ENCODE measurements at regions of chr1 and their contacts with region 1.

Region 1: DNA sequence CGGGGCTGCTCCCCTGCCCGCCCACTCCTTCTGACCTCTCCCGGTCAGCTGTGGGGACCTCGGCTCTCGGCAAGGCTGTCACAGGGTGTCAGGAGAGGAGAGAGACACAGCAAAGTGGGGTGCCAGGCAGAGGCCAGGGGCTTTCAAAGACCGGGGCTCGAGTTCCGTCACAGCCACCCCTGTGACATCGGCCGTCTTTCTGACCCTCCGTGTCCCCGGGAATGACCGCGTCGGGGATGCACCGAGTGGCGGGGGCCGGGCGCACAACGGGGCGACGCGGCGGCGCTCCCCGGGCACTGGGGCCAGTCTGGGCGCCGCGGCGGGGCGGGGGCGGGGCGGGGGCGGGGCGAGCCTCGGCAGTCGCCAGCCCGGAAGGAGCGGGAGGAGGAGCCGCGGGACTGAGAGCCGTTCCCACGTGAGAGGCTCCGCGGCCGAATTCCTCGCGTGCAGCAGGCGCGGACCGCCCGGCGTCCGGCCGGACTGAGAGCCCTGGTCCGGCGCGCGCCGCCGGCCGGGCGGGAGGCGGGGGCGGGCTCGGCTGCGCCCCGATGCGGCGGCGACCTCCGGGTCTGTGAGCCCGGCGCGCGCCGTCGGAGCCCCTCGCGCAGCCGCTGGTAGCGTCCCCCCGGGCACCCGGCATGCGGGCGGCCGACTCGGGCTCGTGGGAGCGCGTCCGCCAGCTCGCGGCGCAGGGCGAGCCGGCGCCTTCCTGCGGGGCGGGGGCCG is 229.7 kb upstream of the TMEM51 start:
- DNase-seq: peak in 1 of 2 donors; percentile 83
- H3K4me3 ChIP-seq: peak overlapping the region; percentile 77 to 91
- H3K27ac ChIP-seq: peak overlapping the region; percentile 74 to 85
- H3K4me1 ChIP-seq: peaks cover 0 to 15% of the 10 kb centered on the region in 2 donors
- H3K27me3 ChIP-seq: no peaks in the 10 kb centered on the region
- CTCF ChIP-seq: no peak

Region 2: GRCh38 chr1:14850566-14850965 is 73.3 kb before region 1 on chr1:
- intact Hi-C with region 1: no loop called
- DNase-seq: no peak
- H3K4me3 ChIP-seq: no peak overlapping the region
- H3K27ac ChIP-seq: no peak overlapping the region
- H3K4me1 ChIP-seq: no peaks in the 10 kb centered on the region
- H3K27me3 ChIP-seq: no peaks in the 10 kb centered on the region
- CTCF ChIP-seq: no peak

Region 3: DNA sequence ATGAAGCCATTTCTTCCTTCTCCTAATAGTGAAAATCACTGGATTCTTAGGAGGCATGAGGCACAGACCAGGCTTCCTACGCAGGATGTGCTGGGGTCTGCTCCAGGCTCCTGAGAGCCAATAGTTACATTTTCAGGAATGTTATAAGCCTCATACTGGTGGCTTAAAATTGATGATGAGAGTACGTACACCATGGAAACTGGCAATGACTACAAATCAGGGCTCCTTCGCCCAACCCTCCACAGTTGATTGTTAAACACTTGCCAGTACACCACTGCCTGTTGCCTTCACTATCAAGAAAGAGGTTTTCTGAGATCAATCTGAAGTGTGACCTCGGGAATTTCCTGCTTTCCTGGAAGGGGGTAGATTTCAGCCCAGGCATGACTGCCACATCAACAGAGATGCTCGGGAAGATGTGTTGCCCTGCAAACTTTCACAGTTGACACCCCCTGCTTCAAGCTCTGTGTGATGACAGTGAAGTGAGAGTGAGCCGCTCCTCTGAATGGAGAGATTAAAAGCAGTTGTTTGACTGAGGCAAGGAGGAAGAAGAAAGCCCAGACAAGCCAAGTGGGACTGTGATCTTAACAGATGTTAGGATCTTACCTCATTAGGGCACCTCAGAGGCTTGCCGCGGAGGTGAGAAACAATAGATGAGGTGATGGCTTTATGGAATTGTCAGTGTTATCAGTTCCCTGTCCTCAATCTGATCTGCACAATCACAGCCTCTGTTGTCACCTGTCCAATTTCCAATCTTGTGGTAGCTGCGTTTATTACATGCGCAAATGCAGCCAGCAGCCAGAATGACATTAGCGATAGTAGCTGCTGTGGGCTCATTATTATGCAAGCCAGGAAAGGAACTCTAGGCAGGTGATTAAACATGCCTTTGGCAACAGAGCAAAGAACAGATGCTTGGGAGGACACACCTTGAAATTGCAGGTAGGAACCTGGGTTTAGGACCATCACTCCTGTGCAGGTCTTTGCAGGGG is 48.1 kb before region 1 on chr1:
- intact Hi-C with region 1: no loop called
- DNase-seq: no peak
- H3K4me3 ChIP-seq: no peak overlapping the region
- H3K27ac ChIP-seq: no peak overlapping the region
- H3K4me1 ChIP-seq: no peaks in the 10 kb centered on the region
- H3K27me3 ChIP-seq: no peaks in the 10 kb centered on the region
- CTCF ChIP-seq: no peak

Region 4: DNA sequence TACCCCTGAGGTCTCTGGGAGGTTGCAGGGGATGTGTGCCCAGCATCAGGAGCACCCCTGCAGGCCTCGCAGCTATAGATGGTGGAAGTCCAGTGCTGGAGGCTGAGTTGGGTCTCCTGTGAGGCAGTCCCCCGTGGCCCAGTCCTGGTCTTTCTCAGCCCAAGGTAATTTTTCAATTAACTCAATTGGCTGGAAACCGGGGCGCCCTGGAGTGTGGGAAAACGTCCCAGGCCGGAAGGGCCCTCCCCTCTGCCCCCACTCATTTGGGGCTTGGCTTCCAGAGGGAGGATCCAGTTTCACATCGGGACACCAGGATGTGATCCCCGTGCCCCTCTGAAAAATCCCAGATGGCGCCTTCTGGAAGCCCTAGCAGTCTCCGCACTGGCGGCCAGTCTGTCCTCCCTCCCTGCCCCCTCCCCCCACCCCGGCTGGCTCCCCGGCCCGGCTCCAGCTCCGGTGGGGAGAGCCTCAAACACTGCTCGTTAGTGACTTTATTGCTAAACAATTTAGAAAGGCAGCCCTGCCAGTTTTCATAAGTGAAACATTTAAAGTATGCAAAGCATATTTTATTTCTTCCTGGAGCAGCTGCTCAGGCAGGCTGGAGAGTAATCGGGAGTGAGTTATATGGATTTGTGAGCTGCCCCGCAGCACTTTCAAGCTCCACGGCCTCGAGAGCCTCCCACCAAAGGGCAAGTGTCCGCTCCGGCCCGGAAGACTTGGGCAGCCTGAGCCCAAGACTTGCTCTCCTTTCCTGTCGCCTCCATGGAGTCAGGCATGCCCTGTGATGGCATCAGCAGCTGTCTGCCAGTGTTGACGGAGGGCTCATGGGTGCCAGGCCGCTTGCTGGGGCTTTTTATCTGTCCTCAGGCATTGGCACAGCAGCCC is 21.5 kb after region 1 on chr1:
- intact Hi-C with region 1: loop called (anchors 1 kb)
- DNase-seq: peak in 1 of 2 donors; percentile 85
- H3K4me3 ChIP-seq: peak overlapping the region; percentile 22 to 39
- H3K27ac ChIP-seq: peak overlapping the region; percentile 77 to 93
- H3K4me1 ChIP-seq: peaks cover 13 to 44% of the 10 kb centered on the region in 2 donors
- H3K27me3 ChIP-seq: no peaks in the 10 kb centered on the region
- CTCF ChIP-seq: no peak

Region 5: DNA sequence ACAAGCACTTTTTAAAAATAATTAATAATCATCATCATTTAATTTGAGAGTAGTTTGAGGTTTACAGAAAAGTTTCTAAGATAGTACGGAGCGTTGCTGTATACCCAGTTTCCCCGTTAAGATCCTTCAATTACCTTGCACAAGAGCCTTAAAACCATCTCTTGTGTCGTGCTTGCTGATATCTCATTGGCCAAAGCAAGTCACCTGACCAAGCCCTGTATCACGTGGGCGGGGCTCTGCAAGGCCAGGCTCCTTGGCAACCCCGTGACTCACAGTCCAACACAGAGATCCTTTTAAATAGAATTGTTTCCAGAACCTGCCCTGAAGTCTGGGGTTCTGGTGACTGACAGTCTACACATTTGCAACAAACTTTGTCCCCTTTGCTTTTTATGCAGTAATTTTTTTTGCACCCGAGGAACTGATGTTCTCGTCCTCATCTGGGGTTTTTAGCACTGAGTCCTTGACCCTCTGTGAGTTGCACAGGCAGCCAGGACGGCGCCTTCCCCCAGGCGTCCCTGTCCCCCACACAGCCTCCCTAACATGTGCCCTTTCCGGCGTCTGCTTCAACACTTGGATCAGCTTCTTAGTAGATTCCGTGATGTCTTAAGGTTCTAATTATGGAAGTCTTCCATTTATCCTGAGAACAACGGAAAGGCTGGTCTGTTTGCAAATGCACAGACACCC is 46.4 kb after region 1 on chr1:
- intact Hi-C with region 1: loop called (anchors 1 kb)
- DNase-seq: peak; percentile 60 to 94
- H3K4me3 ChIP-seq: no peak overlapping the region
- H3K27ac ChIP-seq: peak overlapping the region; percentile 83 to 90
- H3K4me1 ChIP-seq: peaks cover 16 to 39% of the 10 kb centered on the region in 2 donors
- H3K27me3 ChIP-seq: no peaks in the 10 kb centered on the region
- CTCF ChIP-seq: no peak

Region 6: GRCh38 chr1:15028102-15028501 is 104.2 kb after region 1 on chr1:
- intact Hi-C with region 1: loop called (anchors 1 kb)
- DNase-seq: peak; percentile 19 to 88
- H3K4me3 ChIP-seq: no peak overlapping the region
- H3K27ac ChIP-seq: peak overlapping the region; percentile 58 to 77
- H3K4me1 ChIP-seq: peaks cover 4 to 12% of the 10 kb centered on the region in 2 donors
- H3K27me3 ChIP-seq: no peaks in the 10 kb centered on the region
- CTCF ChIP-seq: no peak

Region 7: GRCh38 chr1:15152318-15153183 is 228.7 kb after region 1 on chr1:
- intact Hi-C with region 1: loop called (anchors 10 kb)
- DNase-seq: peak; percentile 44 to 90
- H3K4me3 ChIP-seq: peak overlapping the region; percentile 78 to 91
- H3K27ac ChIP-seq: peak overlapping the region; percentile 74 to 82
- H3K4me1 ChIP-seq: peaks cover 0 to 3% of the 10 kb centered on the region in 2 donors
- H3K27me3 ChIP-seq: no peaks in the 10 kb centered on the region
- CTCF ChIP-seq: peak; percentile 35 to 71 (median 59)